ENCODE measurements at regions of chr10 and their contacts with region 1.

Region 1: GRCh38 chr10:12279281-12279680 is 70.1 kb upstream of the CAMK1D start:
- DNase-seq: no peak
- H3K4me3 ChIP-seq: no peak overlapping the region
- H3K27ac ChIP-seq: no peak overlapping the region
- H3K4me1 ChIP-seq: no peaks in the 10 kb centered on the region
- H3K27me3 ChIP-seq: no peaks in the 10 kb centered on the region
- CTCF ChIP-seq: no peak
- POLR2A ChIP-seq: no peak

Region 2: DNA sequence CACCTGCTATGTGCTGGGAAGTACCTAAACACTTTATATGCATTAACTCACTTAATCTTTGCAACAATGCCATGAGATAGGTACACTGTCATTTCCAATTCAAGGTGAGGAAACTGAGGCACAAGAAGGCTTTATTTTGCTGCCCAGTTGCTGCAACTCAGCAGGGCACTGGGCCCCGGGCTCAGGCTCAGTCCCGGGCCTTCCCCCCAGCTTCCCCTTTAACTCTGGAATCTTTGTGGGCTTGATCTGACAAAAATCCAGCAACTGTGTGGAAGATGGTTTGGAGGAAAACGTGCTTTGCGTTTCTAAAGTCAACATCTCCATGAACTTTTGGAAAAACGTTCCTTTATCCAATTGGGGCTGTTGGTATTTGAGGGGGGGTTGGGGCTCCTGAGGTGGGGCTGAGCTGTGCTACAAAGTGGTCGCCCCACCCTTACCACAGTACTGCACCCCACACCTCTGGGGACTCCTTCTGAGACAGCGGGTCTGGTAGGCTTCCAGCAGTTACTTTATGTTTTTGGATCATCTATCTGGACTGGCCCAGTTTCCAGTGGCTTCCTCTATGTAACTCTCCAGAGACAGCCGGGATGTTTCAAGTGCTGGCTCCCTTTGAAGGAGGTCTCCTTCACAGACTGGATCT is 29.6 kb after region 1 on chr10:
- intact Hi-C with region 1: no loop called
- DNase-seq: no peak
- H3K4me3 ChIP-seq: no peak overlapping the region
- H3K27ac ChIP-seq: no peak overlapping the region
- H3K4me1 ChIP-seq: no peaks in the 10 kb centered on the region
- H3K27me3 ChIP-seq: no peaks in the 10 kb centered on the region
- CTCF ChIP-seq: no peak
- POLR2A ChIP-seq: no peak

Region 3: DNA sequence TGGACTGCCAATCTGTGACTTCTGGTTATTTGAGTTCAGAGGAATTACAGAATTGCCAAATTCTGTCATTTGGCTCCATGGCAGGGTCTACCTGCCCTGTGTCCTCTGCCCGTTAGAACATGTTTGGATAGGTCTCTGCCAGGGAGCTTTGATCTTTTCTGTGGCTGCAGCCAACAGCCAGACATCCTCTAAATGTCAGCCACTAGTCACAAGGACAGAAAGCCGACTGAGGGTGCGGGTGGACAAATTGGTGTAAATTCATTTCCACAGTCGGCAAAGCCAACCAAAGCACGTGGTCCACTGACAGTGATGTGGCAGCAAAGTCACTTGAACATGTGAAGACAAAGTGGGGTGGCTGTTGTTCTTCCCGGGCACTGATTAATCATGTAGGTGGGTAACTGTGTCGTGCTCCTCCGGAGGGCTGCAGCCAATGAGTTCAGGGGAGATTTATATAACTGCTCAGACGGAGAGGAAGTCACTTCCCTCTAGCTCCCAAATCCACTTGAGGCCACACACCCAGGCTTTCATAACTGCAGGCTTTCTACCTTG is 43.4 kb after region 1 on chr10:
- intact Hi-C with region 1: loop called (anchors 10 kb)
- DNase-seq: no peak
- H3K4me3 ChIP-seq: no peak overlapping the region
- H3K27ac ChIP-seq: peak overlapping the region in 3 of 4 donors; percentile 54 to 80 (median 77)
- H3K4me1 ChIP-seq: peaks cover 0 to 46% (median 12%) of the 10 kb centered on the region in 3 donors
- H3K27me3 ChIP-seq: no peaks in the 10 kb centered on the region
- CTCF ChIP-seq: no peak
- POLR2A ChIP-seq: no peak

Region 4: DNA sequence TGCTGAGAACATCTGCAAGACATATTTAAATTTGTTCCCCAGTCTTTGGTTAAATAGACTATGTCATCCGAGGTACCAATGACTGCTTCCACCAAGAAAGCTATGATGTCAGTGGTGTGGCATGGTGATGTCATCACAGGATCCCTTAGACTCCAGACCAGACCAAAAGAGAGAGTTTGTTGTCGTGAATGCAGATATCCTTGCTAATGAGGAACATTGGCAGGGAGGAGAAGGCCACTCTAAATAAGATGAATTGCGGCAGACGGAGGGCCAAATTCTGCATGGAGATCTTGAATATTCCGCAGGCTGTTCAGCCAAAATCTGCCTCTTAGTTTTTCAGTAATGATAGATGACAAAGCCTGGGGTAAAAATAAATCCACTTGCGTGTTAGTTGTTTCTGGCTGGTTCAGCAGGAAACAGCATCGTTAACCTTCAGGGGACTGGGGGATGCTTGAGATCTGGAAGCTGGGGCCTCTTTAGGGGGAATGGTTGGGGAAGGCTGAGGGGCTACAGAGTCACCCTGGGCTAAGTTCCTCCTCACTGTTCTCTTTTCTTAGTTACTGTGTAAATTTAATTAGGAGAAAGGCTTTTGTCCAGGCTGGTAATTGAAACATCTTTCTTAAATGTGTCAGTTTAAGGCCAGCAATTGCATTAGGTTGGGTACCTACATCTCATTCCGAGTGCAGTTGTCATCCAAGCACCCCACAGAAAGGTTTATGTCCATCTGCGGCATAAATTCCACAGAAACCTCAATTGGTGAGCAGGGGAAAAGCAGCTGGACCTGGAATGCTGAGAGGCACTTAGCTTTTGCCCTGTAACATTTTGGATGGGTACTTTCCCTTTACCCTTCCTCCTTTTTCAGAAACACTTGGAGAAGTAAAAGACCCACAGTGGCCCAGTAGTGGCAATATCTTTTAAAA is 58.4 kb after region 1 on chr10:
- intact Hi-C with region 1: no loop called
- DNase-seq: no peak
- H3K4me3 ChIP-seq: no peak overlapping the region
- H3K27ac ChIP-seq: peak overlapping the region in 1 of 4 donors; percentile 6
- H3K4me1 ChIP-seq: peaks cover 8 to 22% (median 16%) of the 10 kb centered on the region in 3 donors
- H3K27me3 ChIP-seq: no peaks in the 10 kb centered on the region
- CTCF ChIP-seq: no peak
- POLR2A ChIP-seq: no peak

Region 5: DNA sequence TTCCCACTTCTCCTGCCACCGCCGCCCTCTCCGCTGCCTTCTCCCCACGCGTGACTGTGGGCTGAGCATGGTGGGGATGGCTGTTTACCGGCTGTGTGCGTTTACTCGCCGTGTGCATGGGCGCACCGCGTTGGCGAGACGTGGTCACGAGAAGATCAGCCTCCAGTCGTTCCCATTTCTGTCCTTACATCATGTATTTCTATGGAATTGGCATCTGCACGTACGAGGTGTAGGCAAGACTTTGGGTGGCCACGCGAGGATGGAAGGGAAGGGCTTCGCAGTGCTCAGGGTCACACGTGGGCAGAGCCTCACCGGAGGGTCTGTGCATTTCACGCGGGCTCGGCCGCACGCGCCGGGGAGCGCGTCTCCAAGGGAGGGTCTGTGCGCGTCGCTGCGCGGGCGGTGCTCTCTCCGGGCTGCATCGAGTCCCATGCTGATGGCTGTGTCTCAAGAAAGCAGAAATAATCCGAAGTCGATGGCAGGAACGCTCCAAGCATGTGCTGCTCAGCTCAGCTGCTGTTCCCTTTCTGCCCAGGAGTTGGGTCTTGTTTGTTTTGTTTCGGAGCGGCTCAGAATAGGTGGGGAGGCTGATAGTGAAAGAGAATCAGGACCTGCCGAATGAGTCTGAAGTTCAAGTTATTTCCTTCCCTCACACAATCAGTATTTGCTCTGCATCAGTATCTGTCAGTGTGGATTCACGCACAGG is 71.0 kb after region 1 on chr10:
- intact Hi-C with region 1: loop called (anchors 10 kb)
- DNase-seq: no peak
- H3K4me3 ChIP-seq: peak overlapping the region; percentile 61 to 96 (median 88)
- H3K27ac ChIP-seq: peak overlapping the region; percentile 82 to 93 (median 88)
- H3K4me1 ChIP-seq: peaks cover 13 to 31% (median 17%) of the 10 kb centered on the region in 3 donors
- H3K27me3 ChIP-seq: no peaks in the 10 kb centered on the region
- CTCF ChIP-seq: peak in 1 of 6 experiments; percentile 23
- POLR2A ChIP-seq: no peak

Region 6: DNA sequence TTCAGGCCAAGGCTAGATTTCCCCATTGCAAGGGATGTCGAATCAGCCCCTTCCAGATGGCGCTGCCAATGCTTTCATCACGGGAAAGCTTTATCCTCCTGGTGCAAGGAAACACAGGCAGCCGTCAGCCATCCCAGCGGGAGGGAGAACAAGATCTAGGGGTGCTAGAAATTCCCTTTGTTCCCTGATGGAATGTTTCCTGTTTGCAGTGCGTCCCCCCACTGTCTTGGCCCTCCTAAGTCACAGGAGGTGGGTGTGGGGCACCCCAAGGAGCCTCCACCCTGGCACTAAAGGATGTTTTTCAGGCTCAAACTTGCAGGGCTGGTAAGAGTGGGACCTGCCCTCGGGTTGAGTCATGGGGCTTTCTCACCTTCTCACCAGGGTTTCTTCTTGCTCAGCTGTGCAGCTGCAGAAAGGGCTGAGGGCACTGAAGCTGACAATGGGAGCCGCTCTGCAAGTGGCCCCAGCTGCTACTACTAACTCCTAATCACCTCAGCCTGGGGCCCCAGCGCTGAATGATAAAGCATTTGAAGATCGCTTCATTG is 1411.1 kb after region 1 on chr10:
- intact Hi-C with region 1: loop called (anchors 10 kb)
- DNase-seq: no peak
- H3K4me3 ChIP-seq: no peak overlapping the region
- H3K27ac ChIP-seq: peak overlapping the region; percentile 49 to 77 (median 56)
- H3K4me1 ChIP-seq: peaks cover 17 to 54% (median 34%) of the 10 kb centered on the region in 3 donors
- H3K27me3 ChIP-seq: no peaks in the 10 kb centered on the region
- CTCF ChIP-seq: no peak
- POLR2A ChIP-seq: no peak